Activated CD8-positive, alpha-beta T cell treated with anti-CD3 and anti-CD28 coated beads for 36 hours (primary cell): ENCODE measurements at regions of chr16 and their contacts with region 1.

Region 1: GRCh38 chr16:12455287-12455798 is 348.3 kb downstream of the CPPED1 start:
- DNase-seq: peak; percentile 51
- ATAC-seq: peak; percentile 70
- H3K4me3 Mint-ChIP-seq: no peak overlapping the region
- H3K27ac Mint-ChIP-seq: no peak overlapping the region
- H3K4me1 Mint-ChIP-seq: peaks cover 21% of the 10 kb centered on the region
- H3K27me3 Mint-ChIP-seq: no peaks in the 10 kb centered on the region
- CTCF ChIP-seq: peak; percentile 85

Region 2: DNA sequence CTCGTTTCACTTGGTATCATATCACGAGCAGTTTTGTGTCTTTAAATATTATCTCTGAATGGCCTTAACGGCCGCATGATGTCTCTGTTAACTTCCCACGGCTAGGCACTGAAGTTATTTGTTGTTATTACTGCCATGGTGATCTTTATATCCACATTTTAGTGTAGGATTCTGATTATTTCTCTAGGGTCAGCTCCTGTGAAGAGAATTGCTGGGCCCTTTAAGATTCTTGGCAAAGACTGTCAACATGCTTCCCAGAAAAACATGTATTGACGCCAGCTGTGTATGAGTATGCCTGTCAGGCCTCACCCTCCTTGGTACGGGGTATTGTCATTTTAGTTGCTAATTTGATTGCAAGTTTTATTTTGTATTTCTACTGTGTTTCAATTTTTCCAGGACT is 215.3 kb before region 1 on chr16:
- CTCF ChIA-PET with region 1: no interaction called
- POLR2A ChIA-PET with region 1: no interaction called
- intact Hi-C with region 1: no loop called
- DNase-seq: no peak
- ATAC-seq: no peak
- H3K4me3 Mint-ChIP-seq: no peak overlapping the region
- H3K27ac Mint-ChIP-seq: no peak overlapping the region
- H3K4me1 Mint-ChIP-seq: no peaks in the 10 kb centered on the region
- H3K27me3 Mint-ChIP-seq: no peaks in the 10 kb centered on the region
- CTCF ChIP-seq: no peak

Region 3: GRCh38 chr16:12392585-12393091 is 62.7 kb before region 1 on chr16:
- CTCF ChIA-PET with region 1: no interaction called
- POLR2A ChIA-PET with region 1: no interaction called
- intact Hi-C with region 1: no loop called
- DNase-seq: no peak
- ATAC-seq: no peak
- H3K4me3 Mint-ChIP-seq: no peak overlapping the region
- H3K27ac Mint-ChIP-seq: no peak overlapping the region
- H3K4me1 Mint-ChIP-seq: no peaks in the 10 kb centered on the region
- H3K27me3 Mint-ChIP-seq: no peaks in the 10 kb centered on the region
- CTCF ChIP-seq: no peak

Region 4: GRCh38 chr16:12819126-12820117 is 364.1 kb after region 1 on chr16:
- CTCF ChIA-PET with region 1: interaction called, 4 read pairs
- POLR2A ChIA-PET with region 1: no interaction called
- intact Hi-C with region 1: loop called (anchors 2 kb)
- DNase-seq: peak; percentile 83
- ATAC-seq: peak; percentile 89
- H3K4me3 Mint-ChIP-seq: no peak overlapping the region
- H3K27ac Mint-ChIP-seq: no peak overlapping the region
- H3K4me1 Mint-ChIP-seq: peaks cover 10% of the 10 kb centered on the region
- H3K27me3 Mint-ChIP-seq: peaks cover 3% of the 10 kb centered on the region
- CTCF ChIP-seq: peak; percentile 88